GM10248 (cell line): ENCODE measurements at regions of chr1 and their contacts with region 1.

Region 1: DNA sequence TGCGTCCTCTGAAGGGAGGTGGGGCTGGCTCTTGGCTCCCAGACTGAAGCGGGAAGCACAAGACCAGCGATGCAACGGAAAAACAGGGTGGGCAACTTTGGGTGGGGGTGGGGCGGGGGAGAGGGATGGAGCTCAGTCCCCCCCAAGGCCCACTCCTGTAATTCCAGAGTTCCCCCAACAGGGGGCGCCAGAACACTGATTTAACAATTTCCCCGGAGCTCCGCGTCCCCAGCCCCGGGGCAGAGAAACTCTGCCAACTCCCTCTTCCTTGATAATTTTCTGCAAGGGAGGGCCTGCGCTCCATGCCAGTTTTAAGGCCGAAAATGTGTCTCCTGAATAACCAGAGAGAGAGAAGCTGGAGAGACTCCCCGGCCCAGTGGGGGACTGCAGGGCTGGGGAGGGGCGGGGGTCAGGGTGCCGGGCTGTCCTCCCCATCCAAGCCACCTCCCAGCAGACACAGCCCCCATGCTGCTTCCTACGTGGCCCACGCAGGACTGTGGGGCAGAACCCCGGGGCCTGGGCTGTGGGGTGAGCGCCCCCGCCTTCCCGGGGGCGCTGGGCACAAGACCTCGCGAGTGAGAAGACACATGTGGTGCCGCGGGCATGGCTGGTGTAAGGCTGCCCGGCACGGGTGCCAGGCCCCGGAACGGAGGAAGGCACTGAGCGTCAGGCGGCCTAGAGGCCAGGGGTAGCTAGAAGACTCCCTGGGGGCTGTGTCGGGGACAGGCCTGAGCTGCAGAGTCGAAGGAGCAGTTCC is 51.4 kb downstream of the KIF21B start:
- DNase-seq: peak; percentile 75
- CTCF ChIP-seq: peak; percentile 59

Region 2: DNA sequence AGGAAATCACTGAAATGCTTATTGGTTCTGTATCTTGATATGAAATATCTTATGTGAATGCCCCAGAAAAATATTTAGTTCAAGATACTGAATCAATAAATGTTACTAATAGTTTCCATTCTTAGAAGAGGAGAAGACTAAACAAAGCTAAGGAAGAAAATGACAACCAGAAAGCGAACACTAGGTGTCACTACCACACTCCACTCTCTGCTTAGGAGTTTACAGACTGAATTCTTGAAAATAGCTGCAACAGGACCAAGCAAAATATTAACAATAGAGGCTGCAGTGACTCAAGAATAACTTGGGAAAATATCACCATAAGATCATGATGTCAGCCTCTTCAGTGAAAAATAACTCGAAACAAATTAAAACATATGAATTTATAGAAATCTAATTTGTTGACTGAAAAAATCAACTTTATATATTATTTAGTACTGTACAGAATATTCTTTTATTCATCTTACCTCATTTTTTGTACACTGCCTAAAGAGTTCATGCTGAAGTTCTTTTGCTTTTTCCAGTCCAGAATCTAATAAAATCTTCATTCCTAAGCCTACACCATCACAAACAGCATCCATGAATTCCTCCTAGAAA is 413.2 kb before region 1 on chr1:
- CTCF ChIA-PET with region 1: interaction called, 24 read pairs
- POLR2A ChIA-PET with region 1: no interaction called
- DNase-seq: peak; percentile 46
- CTCF ChIP-seq: peak; percentile 58

Region 3: GRCh38 chr1:200877839-200878551 is 94.1 kb before region 1 on chr1:
- CTCF ChIA-PET with region 1: interaction called, 10 read pairs
- POLR2A ChIA-PET with region 1: no interaction called
- DNase-seq: peak; percentile 16
- CTCF ChIP-seq: no peak

Region 4: GRCh38 chr1:200945111-200945510 is 27.0 kb before region 1 on chr1:
- CTCF ChIA-PET with region 1: interaction called, 14 read pairs
- POLR2A ChIA-PET with region 1: no interaction called
- DNase-seq: no peak
- CTCF ChIP-seq: no peak

Region 5: DNA sequence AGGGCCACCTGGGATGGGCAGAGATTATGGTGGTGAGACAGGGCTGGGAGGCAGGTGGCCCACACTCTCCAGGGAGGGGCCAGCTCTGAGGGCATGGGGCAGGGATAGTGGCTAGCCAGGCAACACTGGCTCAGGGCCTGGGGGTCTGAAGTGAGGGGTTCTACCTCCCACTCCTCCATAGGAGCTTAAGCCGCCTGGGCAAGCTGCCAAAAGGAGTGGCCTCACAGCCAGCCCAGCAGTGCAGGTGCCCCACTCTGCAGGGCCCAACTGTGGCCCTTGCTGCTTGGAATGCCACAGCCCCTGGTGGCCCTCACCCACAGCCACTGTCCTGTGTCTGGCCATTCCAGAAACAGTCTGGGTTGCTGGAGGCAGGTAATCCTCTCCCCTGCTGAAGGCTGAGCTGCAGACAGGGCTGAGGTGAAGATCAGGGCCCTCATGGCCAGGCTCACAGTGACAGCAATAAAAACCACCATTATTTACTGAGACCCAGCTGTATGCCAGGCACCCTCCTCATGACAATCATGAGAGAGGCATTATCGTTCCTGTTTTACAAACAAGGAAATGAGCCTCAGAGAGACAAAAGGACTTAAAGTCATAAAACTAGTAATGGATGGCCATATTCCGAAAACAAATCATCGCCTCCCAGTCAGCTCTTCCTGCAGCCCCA is 20.4 kb after region 1 on chr1:
- CTCF ChIA-PET with region 1: interaction called, 79 read pairs
- POLR2A ChIA-PET with region 1: no interaction called
- DNase-seq: no peak
- CTCF ChIP-seq: no peak

Region 6: DNA sequence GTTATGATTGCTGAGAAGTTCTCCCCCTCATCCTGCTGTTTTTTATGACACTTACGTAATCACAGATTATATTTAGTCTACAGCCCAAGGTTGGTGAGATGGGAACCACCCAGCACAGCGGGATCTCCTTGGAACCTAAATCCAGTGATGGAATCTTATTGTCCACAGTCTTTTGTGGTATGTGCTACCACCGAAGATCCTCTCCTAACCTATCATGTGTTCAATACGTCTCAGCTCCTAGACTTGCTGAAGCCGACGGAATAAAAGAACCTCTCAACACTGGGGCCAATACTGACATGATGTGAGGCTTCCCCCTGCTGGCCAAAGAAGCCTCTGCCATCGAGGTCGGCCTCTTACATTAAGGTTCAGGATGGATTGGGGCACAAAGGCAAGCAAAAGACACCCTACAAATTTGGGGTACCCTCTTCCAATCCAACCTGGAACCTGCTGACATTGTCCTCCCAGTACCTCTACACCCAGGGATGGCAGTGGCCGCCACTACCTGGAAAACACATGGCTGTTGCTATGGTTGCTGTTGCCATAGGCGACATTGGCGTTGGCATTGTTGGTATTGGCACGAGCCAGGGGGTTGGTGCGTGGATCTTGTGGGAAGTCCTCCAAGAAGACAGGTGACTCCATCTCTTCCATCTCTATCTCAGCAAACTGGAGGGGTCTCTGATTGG is 70.8 kb after region 1 on chr1:
- CTCF ChIA-PET with region 1: interaction called, 151 read pairs
- POLR2A ChIA-PET with region 1: no interaction called
- DNase-seq: peak; percentile 79
- CTCF ChIP-seq: peak; percentile 94

Region 7: GRCh38 chr1:201114236-201115131 is 142.4 kb after region 1 on chr1:
- CTCF ChIA-PET with region 1: interaction called, 88 read pairs
- POLR2A ChIA-PET with region 1: no interaction called
- DNase-seq: peak; percentile 87
- CTCF ChIP-seq: peak; percentile 86